ENCODE measurements at regions of chr3 and their contacts with region 1.

Region 1: GRCh38 chr3:171459942-171460724 is at the start of gene TNIK:
- DNase-seq: peak; percentile 85 to 98 (median 95)
- ATAC-seq: peak; percentile 81 to 86 (median 84)
- H3K4me3 ChIP-seq: peak within 1 kb of the TSS; percentile 71 to 80
- H3K4me3 Mint-ChIP-seq: peak within 1 kb of the TSS; percentile 88 to 96 (median 96)
- H3K27ac ChIP-seq: peak within 1 kb of the TSS; percentile 73
- H3K27ac Mint-ChIP-seq: peak within 1 kb of the TSS; percentile 93 to 95
- H3K4me1 ChIP-seq: peaks cover 30 to 32% of the 10 kb centered on the region in 2 experiments
- H3K4me1 Mint-ChIP-seq: peaks cover 40 to 58% (median 53%) of the 10 kb centered on the region in 3 donors
- H3K27me3 ChIP-seq: no peaks in the 10 kb centered on the region
- H3K27me3 Mint-ChIP-seq: no peaks in the 10 kb centered on the region
- total RNA-seq, gene TNIK: 52.2 to 81.0 (median 60.9) TPM

Region 2: GRCh38 chr3:171480526-171480925 is 20.4 kb after region 1 on chr3:
- CTCF ChIA-PET with region 1: interaction called, 3 read pairs
- POLR2A ChIA-PET with region 1: interaction called, 10 to 11 read pairs
- DNase-seq: peak in 2 of 35 experiments; percentile 5 to 47
- ATAC-seq: peak; percentile 74 to 90 (median 80)
- H3K4me3 ChIP-seq: no peak overlapping the region
- H3K4me3 Mint-ChIP-seq: peak overlapping the region; percentile 19 to 45 (median 22)
- H3K27ac ChIP-seq: peak overlapping the region; percentile 52
- H3K27ac Mint-ChIP-seq: peak overlapping the region; percentile 89 to 90
- H3K4me1 ChIP-seq: peaks cover 0 to 13% of the 10 kb centered on the region in 2 experiments
- H3K4me1 Mint-ChIP-seq: peaks cover 10 to 16% (median 15%) of the 10 kb centered on the region in 3 donors
- H3K27me3 ChIP-seq: no peaks in the 10 kb centered on the region
- H3K27me3 Mint-ChIP-seq: no peaks in the 10 kb centered on the region

Region 3: DNA sequence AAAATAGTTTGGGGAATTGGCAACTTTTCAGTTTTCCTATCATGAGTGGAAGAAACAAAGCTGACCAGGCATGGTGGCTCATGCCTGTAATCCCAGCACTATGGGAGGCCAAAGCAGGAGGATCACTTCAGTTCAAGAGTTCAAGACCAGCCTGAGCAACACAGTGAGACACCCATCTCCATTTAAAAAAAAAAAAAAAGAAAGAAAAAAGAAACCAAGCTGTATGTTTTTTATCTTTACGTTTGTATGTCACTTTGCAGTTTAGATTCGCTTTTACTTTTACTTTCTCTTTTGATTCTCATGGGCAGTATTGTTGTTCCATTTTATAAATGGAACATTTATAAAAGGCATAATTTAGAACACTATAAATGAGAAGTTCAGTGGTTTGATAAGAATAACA is 31.2 kb after region 1 on chr3:
- CTCF ChIA-PET with region 1: interaction called in 1 of 2 experiments, 10 read pairs
- POLR2A ChIA-PET with region 1: interaction called in 1 of 2 experiments, 8 read pairs
- DNase-seq: peak in 1 of 35 experiments; percentile 46
- ATAC-seq: peak in 2 of 4 experiments; percentile 24 to 25
- H3K4me3 ChIP-seq: peak overlapping the region in 1 of 2 donors; percentile 16
- H3K4me3 Mint-ChIP-seq: peak overlapping the region; percentile 25 to 76 (median 66)
- H3K27ac ChIP-seq: peak overlapping the region; percentile 47
- H3K27ac Mint-ChIP-seq: peak overlapping the region; percentile 70 to 83
- H3K4me1 ChIP-seq: peaks cover 25 to 29% of the 10 kb centered on the region in 2 experiments
- H3K4me1 Mint-ChIP-seq: peaks cover 38 to 52% (median 48%) of the 10 kb centered on the region in 3 donors
- H3K27me3 ChIP-seq: no peaks in the 10 kb centered on the region
- H3K27me3 Mint-ChIP-seq: no peaks in the 10 kb centered on the region

Region 4: GRCh38 chr3:171514466-171514865 is 54.3 kb after region 1 on chr3:
- CTCF ChIA-PET with region 1: interaction called in 1 of 2 experiments, 11 read pairs
- POLR2A ChIA-PET with region 1: no interaction called
- DNase-seq: no peak
- ATAC-seq: no peak
- H3K4me3 ChIP-seq: no peak overlapping the region
- H3K4me3 Mint-ChIP-seq: no peak overlapping the region
- H3K27ac ChIP-seq: no peak overlapping the region
- H3K27ac Mint-ChIP-seq: no peak overlapping the region
- H3K4me1 ChIP-seq: no peaks in the 10 kb centered on the region
- H3K4me1 Mint-ChIP-seq: peaks cover 0 to 5% (median 0%) of the 10 kb centered on the region in 3 donors
- H3K27me3 ChIP-seq: no peaks in the 10 kb centered on the region
- H3K27me3 Mint-ChIP-seq: no peaks in the 10 kb centered on the region

Region 5: GRCh38 chr3:171574556-171575240 is 114.6 kb after region 1 on chr3:
- CTCF ChIA-PET with region 1: no interaction called
- POLR2A ChIA-PET with region 1: no interaction called
- DNase-seq: no peak
- ATAC-seq: no peak
- H3K4me3 ChIP-seq: no peak overlapping the region
- H3K4me3 Mint-ChIP-seq: no peak overlapping the region
- H3K27ac ChIP-seq: no peak overlapping the region
- H3K27ac Mint-ChIP-seq: no peak overlapping the region
- H3K4me1 ChIP-seq: no peaks in the 10 kb centered on the region
- H3K4me1 Mint-ChIP-seq: no peaks in the 10 kb centered on the region
- H3K27me3 ChIP-seq: no peaks in the 10 kb centered on the region
- H3K27me3 Mint-ChIP-seq: peaks cover 20 to 32% of the 10 kb centered on the region in 2 donors

Region 6: DNA sequence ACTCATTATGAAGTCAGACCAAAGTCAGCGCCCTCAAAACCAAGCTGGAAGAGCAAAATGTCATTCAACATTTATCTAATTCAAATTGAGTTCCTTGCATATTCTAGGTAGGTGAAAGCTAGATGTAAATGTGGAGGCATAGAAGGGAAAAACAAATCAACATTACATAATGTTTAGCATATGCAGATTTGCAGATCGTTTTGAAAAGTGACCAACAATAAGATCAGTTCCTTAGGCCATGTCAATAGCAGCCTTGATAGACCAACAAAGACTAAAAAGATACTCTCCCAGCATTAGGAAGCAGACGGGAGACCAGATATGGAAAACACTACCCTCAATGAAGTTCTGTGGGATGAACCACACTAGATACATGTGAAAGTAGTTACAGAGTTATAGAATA is 267.2 kb after region 1 on chr3:
- CTCF ChIA-PET with region 1: no interaction called
- POLR2A ChIA-PET with region 1: no interaction called
- DNase-seq: no peak
- ATAC-seq: no peak
- H3K4me3 ChIP-seq: no peak overlapping the region
- H3K4me3 Mint-ChIP-seq: no peak overlapping the region
- H3K27ac ChIP-seq: no peak overlapping the region
- H3K27ac Mint-ChIP-seq: no peak overlapping the region
- H3K4me1 ChIP-seq: no peaks in the 10 kb centered on the region
- H3K4me1 Mint-ChIP-seq: no peaks in the 10 kb centered on the region
- H3K27me3 ChIP-seq: no peaks in the 10 kb centered on the region
- H3K27me3 Mint-ChIP-seq: peaks cover 0 to 8% of the 10 kb centered on the region in 2 donors

Region 7: GRCh38 chr3:171758109-171758508 is 298.0 kb after region 1 on chr3:
- CTCF ChIA-PET with region 1: no interaction called
- POLR2A ChIA-PET with region 1: interaction called in 1 of 2 experiments, 12 read pairs
- DNase-seq: no peak
- ATAC-seq: no peak
- H3K4me3 ChIP-seq: no peak overlapping the region
- H3K4me3 Mint-ChIP-seq: no peak overlapping the region
- H3K27ac ChIP-seq: no peak overlapping the region
- H3K27ac Mint-ChIP-seq: no peak overlapping the region
- H3K4me1 ChIP-seq: no peaks in the 10 kb centered on the region
- H3K4me1 Mint-ChIP-seq: no peaks in the 10 kb centered on the region
- H3K27me3 ChIP-seq: peaks cover 0 to 5% of the 10 kb centered on the region in 2 experiments
- H3K27me3 Mint-ChIP-seq: peaks cover 7 to 14% of the 10 kb centered on the region in 2 donors